Naive thymus-derived CD4-positive, alpha-beta T cell (primary cell): ENCODE measurements at regions of chr1 and their contacts with region 1.

Region 1: DNA sequence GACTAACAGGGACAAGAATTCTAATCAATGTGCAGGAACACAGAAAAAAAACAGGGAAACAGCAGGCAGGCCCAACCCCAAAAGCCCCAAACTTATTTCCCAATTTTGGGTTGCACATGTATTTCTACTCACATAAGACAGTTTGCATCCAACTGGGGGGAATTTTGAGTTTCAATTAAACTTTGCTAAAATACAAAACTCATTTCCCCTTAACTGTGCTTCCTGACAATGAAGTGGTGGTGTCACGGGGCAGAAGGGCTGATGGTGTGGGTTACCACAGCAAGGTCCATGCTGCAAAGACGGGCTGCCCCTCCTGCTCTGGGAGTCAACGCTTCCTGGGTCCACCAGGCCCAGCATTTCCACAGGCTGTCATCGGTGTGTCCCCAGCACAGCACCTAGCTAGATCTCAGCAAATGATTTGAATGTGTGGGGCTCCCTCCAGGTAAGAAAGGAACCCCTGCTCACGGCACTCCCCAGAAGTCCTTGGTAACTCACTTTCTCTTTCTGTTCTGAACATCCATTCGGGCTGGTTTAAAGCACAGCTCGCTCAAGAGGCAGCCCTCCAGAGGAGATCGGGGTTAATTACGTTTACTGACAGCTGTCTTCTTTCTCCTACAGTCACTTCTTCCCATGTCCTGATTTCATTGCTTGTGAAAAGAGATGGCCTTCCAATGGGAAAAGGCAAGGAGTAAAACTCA is 27.4 kb downstream of the HIVEP3 start:
- DNase-seq: peak; percentile 37 to 80 (median 75)
- ATAC-seq: peak; percentile 94
- H3K4me3 ChIP-seq: peak overlapping the region; percentile 60
- H3K4me3 Mint-ChIP-seq: peak overlapping the region; percentile 77 to 93 (median 84)
- H3K27ac ChIP-seq: peak overlapping the region; percentile 68
- H3K27ac Mint-ChIP-seq: peak overlapping the region; percentile 84 to 94 (median 92)
- H3K4me1 ChIP-seq: peaks cover 17 to 45% of the 10 kb centered on the region in 2 donors
- H3K4me1 Mint-ChIP-seq: peaks cover 23 to 64% (median 36%) of the 10 kb centered on the region in 7 donors
- H3K27me3 ChIP-seq: no peaks in the 10 kb centered on the region
- H3K27me3 Mint-ChIP-seq: peaks cover 0 to 2% (median 0%) of the 10 kb centered on the region in 5 donors

Region 2: GRCh38 chr1:41751804-41752513 is 139.4 kb before region 1 on chr1:
- CTCF ChIA-PET with region 1: interaction called, 3 read pairs
- POLR2A ChIA-PET with region 1: no interaction called
- intact Hi-C with region 1: loop called in 1 of 2 experiments (anchors 5 kb)
- DNase-seq: no peak
- ATAC-seq: peak; percentile 80
- H3K4me3 ChIP-seq: no peak overlapping the region
- H3K4me3 Mint-ChIP-seq: peak overlapping the region in 6 of 10 donors; percentile 47 to 74 (median 65)
- H3K27ac ChIP-seq: no peak overlapping the region
- H3K27ac Mint-ChIP-seq: peak overlapping the region in 3 of 9 donors; percentile 14 to 84 (median 83)
- H3K4me1 ChIP-seq: peaks cover 31 to 37% of the 10 kb centered on the region in 2 donors
- H3K4me1 Mint-ChIP-seq: peaks cover 23 to 73% (median 46%) of the 10 kb centered on the region in 7 donors
- H3K27me3 ChIP-seq: no peaks in the 10 kb centered on the region
- H3K27me3 Mint-ChIP-seq: no peaks in the 10 kb centered on the region

Region 3: DNA sequence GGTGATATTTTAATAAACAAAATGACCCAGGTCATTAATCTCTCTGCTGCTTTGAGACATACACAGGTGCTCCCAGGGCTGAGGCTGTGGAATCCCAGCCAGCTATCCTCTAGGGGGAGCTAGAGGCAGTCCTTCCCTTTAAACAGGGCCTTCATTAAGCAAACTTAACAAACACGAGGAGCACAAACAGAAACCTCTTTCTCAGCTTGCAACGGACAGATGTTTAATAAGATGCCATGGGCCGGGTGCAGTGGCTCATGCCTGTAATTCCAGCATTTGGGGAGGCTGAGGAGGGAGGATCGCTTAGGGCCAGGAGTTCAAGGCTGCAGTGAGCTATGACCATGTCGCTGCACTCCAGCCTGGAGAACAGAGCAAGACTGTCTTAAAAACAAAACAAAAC is 79.3 kb before region 1 on chr1:
- CTCF ChIA-PET with region 1: no interaction called
- POLR2A ChIA-PET with region 1: no interaction called
- intact Hi-C with region 1: loop called in 1 of 2 experiments (anchors 5 kb)
- DNase-seq: peak in 6 of 9 donors; percentile 23 to 63 (median 47)
- ATAC-seq: peak; percentile 77
- H3K4me3 ChIP-seq: no peak overlapping the region
- H3K4me3 Mint-ChIP-seq: peak overlapping the region in 1 of 10 donors; percentile 29
- H3K27ac ChIP-seq: no peak overlapping the region
- H3K27ac Mint-ChIP-seq: peak overlapping the region in 2 of 9 donors; percentile 21 to 66
- H3K4me1 ChIP-seq: peaks cover 5 to 28% of the 10 kb centered on the region in 2 donors
- H3K4me1 Mint-ChIP-seq: peaks cover 17 to 48% (median 26%) of the 10 kb centered on the region in 7 donors
- H3K27me3 ChIP-seq: no peaks in the 10 kb centered on the region
- H3K27me3 Mint-ChIP-seq: no peaks in the 10 kb centered on the region

Region 4: GRCh38 chr1:41919764-41920397 is 28.5 kb after region 1 on chr1:
- CTCF ChIA-PET with region 1: interaction called, 38 read pairs
- POLR2A ChIA-PET with region 1: interaction called, 344 read pairs
- intact Hi-C with region 1: loop called (anchors 1 kb)
- DNase-seq: peak; percentile 51 to 82 (median 79)
- ATAC-seq: peak; percentile 89
- H3K4me3 ChIP-seq: peak overlapping the region; percentile 74
- H3K4me3 Mint-ChIP-seq: peak overlapping the region; percentile 90 to 97 (median 95)
- H3K27ac ChIP-seq: peak overlapping the region; percentile 52
- H3K27ac Mint-ChIP-seq: peak overlapping the region; percentile 84 to 99 (median 96)
- H3K4me1 ChIP-seq: peaks cover 48 to 54% of the 10 kb centered on the region in 2 donors
- H3K4me1 Mint-ChIP-seq: peaks cover 37 to 62% (median 56%) of the 10 kb centered on the region in 7 donors
- H3K27me3 ChIP-seq: no peaks in the 10 kb centered on the region
- H3K27me3 Mint-ChIP-seq: peaks cover 0 to 17% (median 0%) of the 10 kb centered on the region in 5 donors